Transverse colon (tissue), 4 donors: ENCODE measurements at regions of chr2 and their contacts with region 1.

Region 1: DNA sequence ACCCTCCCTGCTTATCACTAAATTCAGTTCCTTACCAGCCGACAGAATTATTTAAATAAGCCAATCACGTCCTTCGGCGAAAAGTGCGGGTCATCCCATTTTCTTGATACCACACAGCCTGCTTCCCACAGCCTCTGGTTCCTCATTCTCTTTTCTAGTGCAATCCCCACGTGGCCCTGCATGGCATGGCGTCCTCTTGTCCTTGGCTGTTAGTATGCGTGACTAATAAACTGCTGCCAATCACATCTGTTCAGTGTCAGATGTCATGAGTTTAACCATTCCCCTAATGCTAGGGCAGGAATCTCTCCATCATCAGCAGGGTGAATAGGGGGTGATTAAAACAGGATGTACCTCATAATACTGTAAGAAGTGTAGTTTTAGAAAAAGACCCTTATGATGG is 62.8 kb upstream of the TSPYL6 start:
- DNase-seq: no peak
- H3K4me3 ChIP-seq: no peak overlapping the region
- H3K27ac ChIP-seq: no peak overlapping the region
- H3K4me1 ChIP-seq: no peaks in the 10 kb centered on the region
- H3K27me3 ChIP-seq: no peaks in the 10 kb centered on the region
- CTCF ChIP-seq: no peak
- EP300 ChIP-seq: no peak
- POLR2A ChIP-seq: no peak

Region 2: GRCh38 chr2:54387059-54387991 is 68.5 kb after region 1 on chr2:
- in situ Hi-C with region 1: no loop called
- intact Hi-C with region 1: loop called (anchors 2 kb)
- DNase-seq: no peak
- H3K4me3 ChIP-seq: no peak overlapping the region
- H3K27ac ChIP-seq: peak overlapping the region; percentile 5 to 36 (median 28)
- H3K4me1 ChIP-seq: no peaks in the 10 kb centered on the region
- H3K27me3 ChIP-seq: no peaks in the 10 kb centered on the region
- CTCF ChIP-seq: peak in 1 of 5 experiments; percentile 15
- EP300 ChIP-seq: no peak
- POLR2A ChIP-seq: no peak